Activated CD8-positive, alpha-beta T cell treated with anti-CD3 and anti-CD28 coated beads for 36 hours (primary cell): ENCODE measurements at regions of chr19 and their contacts with region 1.

Region 1: DNA sequence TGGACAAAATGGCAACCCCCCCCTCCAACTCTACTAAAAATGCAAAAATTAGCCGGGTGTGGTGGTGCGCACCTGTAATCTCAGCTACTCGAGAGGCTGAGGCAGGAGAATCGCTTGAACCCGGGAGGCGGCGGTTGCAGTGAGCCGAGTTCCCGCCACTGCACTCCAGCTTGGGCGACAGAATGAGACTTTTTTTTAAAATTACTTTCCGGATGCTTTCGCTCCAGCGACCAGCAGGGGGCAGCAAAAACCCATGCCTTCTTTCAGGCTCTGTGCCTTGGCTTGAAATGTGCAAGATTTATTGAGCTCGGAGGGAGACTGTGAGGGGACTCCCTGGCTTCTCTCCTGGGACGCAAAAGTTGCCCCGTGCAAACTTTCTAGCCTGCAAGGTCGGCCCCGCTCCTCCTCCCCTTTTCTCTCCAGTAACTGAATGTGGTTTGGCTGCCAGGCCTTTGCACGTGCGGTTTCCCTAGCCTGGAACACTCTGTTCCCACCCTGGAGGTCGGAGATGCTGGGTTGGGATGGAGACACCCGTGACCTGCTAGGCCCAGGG is 61.4 kb upstream of the NFIC start:
- DNase-seq: peak; percentile 86
- ATAC-seq: peak; percentile 72
- H3K4me3 Mint-ChIP-seq: no peak overlapping the region
- H3K27ac Mint-ChIP-seq: no peak overlapping the region
- H3K4me1 Mint-ChIP-seq: no peaks in the 10 kb centered on the region
- H3K27me3 Mint-ChIP-seq: peaks cover 21% of the 10 kb centered on the region
- CTCF ChIP-seq: peak; percentile 87

Region 2: GRCh38 chr19:3266792-3267514 is 38.0 kb before region 1 on chr19:
- CTCF ChIA-PET with region 1: no interaction called
- POLR2A ChIA-PET with region 1: no interaction called
- intact Hi-C with region 1: no loop called
- DNase-seq: no peak
- ATAC-seq: no peak
- H3K4me3 Mint-ChIP-seq: no peak overlapping the region
- H3K27ac Mint-ChIP-seq: no peak overlapping the region
- H3K4me1 Mint-ChIP-seq: no peaks in the 10 kb centered on the region
- H3K27me3 Mint-ChIP-seq: peaks cover 23% of the 10 kb centered on the region
- CTCF ChIP-seq: no peak

Region 3: GRCh38 chr19:3284759-3285646 is 19.9 kb before region 1 on chr19:
- CTCF ChIA-PET with region 1: interaction called, 10 read pairs
- POLR2A ChIA-PET with region 1: no interaction called
- intact Hi-C with region 1: no loop called
- DNase-seq: peak; percentile 96
- ATAC-seq: peak; percentile 88
- H3K4me3 Mint-ChIP-seq: peak overlapping the region; percentile 54
- H3K27ac Mint-ChIP-seq: peak overlapping the region; percentile 80
- H3K4me1 Mint-ChIP-seq: peaks cover 11% of the 10 kb centered on the region
- H3K27me3 Mint-ChIP-seq: peaks cover 14% of the 10 kb centered on the region
- CTCF ChIP-seq: no peak

Region 4: GRCh38 chr19:3324321-3324856 is 19.4 kb after region 1 on chr19:
- CTCF ChIA-PET with region 1: interaction called, 17 read pairs
- POLR2A ChIA-PET with region 1: no interaction called
- intact Hi-C with region 1: no loop called
- DNase-seq: peak; percentile 88
- ATAC-seq: peak; percentile 79
- H3K4me3 Mint-ChIP-seq: no peak overlapping the region
- H3K27ac Mint-ChIP-seq: no peak overlapping the region
- H3K4me1 Mint-ChIP-seq: no peaks in the 10 kb centered on the region
- H3K27me3 Mint-ChIP-seq: peaks cover 10% of the 10 kb centered on the region
- CTCF ChIP-seq: peak; percentile 86

Region 5: DNA sequence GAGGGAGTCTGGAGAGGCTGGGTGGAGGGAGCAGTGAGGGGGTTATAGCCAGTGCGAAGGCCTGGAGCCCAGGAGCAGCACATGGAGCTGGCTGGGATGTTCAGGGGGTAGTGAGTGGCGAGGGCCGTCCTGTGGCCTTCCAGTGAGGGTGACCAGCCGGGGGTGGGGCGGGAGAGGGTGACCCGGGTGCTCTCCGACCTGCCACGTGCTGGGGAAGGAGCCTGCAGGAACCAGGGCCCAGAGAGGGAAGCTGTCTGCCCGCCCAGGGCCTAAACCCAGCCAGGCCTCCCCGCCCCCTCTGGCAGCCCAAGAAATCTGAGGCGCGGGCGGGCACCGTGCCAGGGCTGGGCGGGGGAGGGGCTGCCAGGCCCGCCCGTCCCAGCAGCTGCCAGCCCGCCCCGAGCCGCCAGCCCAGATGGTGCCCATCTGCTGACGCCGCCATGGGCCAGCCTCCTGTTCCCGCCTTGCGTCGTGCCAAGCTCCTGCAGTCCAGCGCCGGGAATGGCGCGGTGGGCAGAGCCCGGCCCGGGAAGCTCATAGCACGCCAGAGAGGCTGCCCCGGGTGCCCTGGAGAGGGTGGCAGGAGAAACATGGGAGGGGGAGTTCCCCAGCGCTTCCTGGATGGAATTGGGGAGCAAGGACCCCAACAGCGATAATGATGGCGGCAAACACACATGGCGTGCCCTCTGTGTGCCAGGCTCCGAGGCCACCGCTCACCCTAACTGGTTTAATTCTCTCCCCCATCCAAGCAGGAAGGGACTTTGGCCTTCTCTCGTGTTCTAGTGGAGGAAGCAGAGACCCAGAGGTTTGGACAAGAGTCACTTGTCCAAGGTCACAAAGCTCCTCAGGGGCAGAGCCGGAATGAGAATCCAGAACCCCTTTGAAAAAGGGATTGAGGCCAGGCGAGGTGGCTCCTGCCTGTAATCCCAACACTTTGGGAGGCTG is 83.0 kb after region 1 on chr19:
- CTCF ChIA-PET with region 1: no interaction called
- POLR2A ChIA-PET with region 1: no interaction called
- intact Hi-C with region 1: no loop called
- DNase-seq: no peak
- ATAC-seq: no peak
- H3K4me3 Mint-ChIP-seq: no peak overlapping the region
- H3K27ac Mint-ChIP-seq: no peak overlapping the region
- H3K4me1 Mint-ChIP-seq: peaks cover 9% of the 10 kb centered on the region
- H3K27me3 Mint-ChIP-seq: no peaks in the 10 kb centered on the region
- CTCF ChIP-seq: no peak

Region 6: GRCh38 chr19:3471954-3472655 is 167.2 kb after region 1 on chr19:
- CTCF ChIA-PET with region 1: interaction called, 17 read pairs
- POLR2A ChIA-PET with region 1: no interaction called
- intact Hi-C with region 1: no loop called
- DNase-seq: peak; percentile 47
- ATAC-seq: no peak
- H3K4me3 Mint-ChIP-seq: no peak overlapping the region
- H3K27ac Mint-ChIP-seq: no peak overlapping the region
- H3K4me1 Mint-ChIP-seq: no peaks in the 10 kb centered on the region
- H3K27me3 Mint-ChIP-seq: no peaks in the 10 kb centered on the region
- CTCF ChIP-seq: peak; percentile 77

Region 7: DNA sequence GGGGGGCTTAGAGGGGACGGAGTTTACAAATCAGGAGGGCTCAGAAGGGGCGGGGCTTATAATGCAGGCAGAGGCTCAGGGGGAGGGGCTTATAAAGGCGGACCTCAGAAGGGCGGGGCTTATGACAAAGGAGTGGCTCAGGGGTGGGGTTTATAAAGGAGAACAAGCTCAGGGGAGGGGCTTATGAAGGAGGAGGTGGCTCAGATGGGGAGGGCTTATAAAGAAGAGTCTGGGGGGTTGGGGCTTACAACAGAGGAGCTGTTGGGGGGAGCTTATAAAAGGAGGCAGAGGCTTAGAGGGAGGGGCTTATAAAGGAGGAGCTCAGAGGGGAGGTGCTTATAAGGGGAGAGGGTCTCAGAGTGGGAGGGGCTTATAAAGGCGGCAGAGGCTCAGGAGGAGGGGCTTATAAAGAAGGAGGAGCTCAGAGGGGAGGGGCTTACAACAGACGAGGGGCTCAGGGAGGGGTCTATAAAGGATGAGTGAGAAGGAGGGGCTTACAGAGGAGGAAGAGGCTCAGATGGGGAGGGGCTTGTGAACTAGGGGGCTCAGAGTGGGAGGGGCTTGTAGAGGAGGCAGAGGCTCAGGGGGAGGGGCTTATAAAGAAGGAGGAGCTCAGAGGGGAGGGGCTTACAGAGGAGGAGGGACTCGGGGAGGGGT is 174.4 kb after region 1 on chr19:
- CTCF ChIA-PET with region 1: interaction called, 42 read pairs
- POLR2A ChIA-PET with region 1: no interaction called
- intact Hi-C with region 1: no loop called
- DNase-seq: peak; percentile 84
- ATAC-seq: peak; percentile 87
- H3K4me3 Mint-ChIP-seq: no peak overlapping the region
- H3K27ac Mint-ChIP-seq: no peak overlapping the region
- H3K4me1 Mint-ChIP-seq: peaks cover 16% of the 10 kb centered on the region
- H3K27me3 Mint-ChIP-seq: no peaks in the 10 kb centered on the region
- CTCF ChIP-seq: no peak